ENCODE measurements at regions of chr7 and their contacts with region 1.

Region 1: DNA sequence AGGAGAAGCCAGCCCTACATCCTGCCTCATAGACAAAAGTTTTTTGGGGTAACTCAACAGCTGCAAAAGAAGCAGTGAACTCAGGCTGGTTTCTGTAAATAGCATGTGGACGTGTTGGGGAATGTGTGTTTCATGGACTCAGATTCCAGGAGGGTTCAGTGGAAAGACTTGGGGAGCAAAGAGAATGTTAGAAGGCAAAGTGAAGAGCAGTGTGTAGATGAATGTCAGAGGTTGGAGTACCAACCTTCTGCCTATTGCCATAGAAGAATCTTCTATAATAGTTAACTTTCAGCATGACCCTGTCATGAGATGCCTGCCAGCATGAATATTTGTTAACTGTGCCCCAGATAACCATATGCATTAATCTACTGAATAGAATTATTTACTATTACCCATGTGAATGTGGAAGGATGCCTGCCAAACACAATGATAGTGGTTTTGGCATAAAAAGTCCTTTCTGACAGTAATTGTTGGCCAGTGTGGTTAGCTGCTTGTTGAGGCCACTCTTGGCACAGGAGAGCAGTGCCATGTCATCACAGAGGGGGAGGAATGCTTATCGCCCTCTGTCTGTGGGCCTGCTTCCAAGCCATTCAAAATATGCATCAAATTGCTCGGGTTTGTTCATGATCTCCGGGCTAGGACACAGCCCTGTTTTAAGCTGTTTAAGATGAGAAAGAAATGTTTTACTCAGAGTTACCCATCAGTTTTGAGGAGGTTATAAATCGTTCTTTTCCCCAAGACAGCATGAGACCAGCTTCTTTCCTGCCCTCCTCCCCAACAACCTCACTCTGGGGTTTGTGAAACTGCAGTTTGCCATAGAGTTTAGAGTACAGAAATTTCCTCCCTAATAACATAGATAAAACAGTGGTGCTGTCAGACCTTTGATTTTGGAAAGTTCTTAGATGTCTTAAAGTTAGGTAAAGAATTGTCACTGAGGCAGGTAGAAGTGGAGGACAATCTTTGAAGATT is 165.3 kb downstream of the WNT2 start:
- DNase-seq: peak; percentile 37 to 79 (median 71)
- H3K4me3 ChIP-seq: peak overlapping the region in 1 of 59 donors; percentile 8
- H3K27ac ChIP-seq: peak overlapping the region in 11 of 59 donors; percentile 2 to 54 (median 19)
- H3K27me3 ChIP-seq: no peaks in the 10 kb centered on the region
- CTCF ChIP-seq: peak in 52 of 56 donors; percentile 16 to 70 (median 49)

Region 2: GRCh38 chr7:117019786-117020590 is 137.5 kb before region 1 on chr7:
- intact Hi-C with region 1: loop called in 1 of 2 experiments (anchors 10 kb)
- DNase-seq: peak; percentile 60 to 94 (median 90)
- H3K4me3 ChIP-seq: peak overlapping the region; percentile 34 to 76 (median 63)
- H3K27ac ChIP-seq: peak overlapping the region; percentile 15 to 93 (median 83)
- H3K27me3 ChIP-seq: no peaks in the 10 kb centered on the region
- CTCF ChIP-seq: peak in 13 of 56 donors; percentile 5 to 30 (median 21)

Region 3: GRCh38 chr7:117127585-117128168 is 29.8 kb before region 1 on chr7:
- intact Hi-C with region 1: no loop called
- DNase-seq: peak in 4 of 10 donors; percentile 37 to 76 (median 62)
- H3K4me3 ChIP-seq: no peak overlapping the region
- H3K27ac ChIP-seq: peak overlapping the region in 3 of 59 donors; percentile 9 to 72 (median 11)
- H3K27me3 ChIP-seq: no peaks in the 10 kb centered on the region
- CTCF ChIP-seq: peak; percentile 72 to 93 (median 84)